ENCODE measurements at regions of chr3 and their contacts with region 1.

Region 1: GRCh38 chr3:95407709-95408463 is 1345.0 kb downstream of the NSUN3 start:
- DNase-seq: no peak
- H3K4me3 ChIP-seq: no peak overlapping the region
- H3K4me3 Mint-ChIP-seq: no peak overlapping the region
- H3K27ac Mint-ChIP-seq: no peak overlapping the region
- H3K4me1 ChIP-seq: peaks cover 28% of the 10 kb centered on the region
- H3K4me1 Mint-ChIP-seq: peaks cover 7% of the 10 kb centered on the region
- H3K27me3 ChIP-seq: no peaks in the 10 kb centered on the region
- H3K27me3 Mint-ChIP-seq: no peaks in the 10 kb centered on the region
- CTCF ChIP-seq: no peak

Region 2: DNA sequence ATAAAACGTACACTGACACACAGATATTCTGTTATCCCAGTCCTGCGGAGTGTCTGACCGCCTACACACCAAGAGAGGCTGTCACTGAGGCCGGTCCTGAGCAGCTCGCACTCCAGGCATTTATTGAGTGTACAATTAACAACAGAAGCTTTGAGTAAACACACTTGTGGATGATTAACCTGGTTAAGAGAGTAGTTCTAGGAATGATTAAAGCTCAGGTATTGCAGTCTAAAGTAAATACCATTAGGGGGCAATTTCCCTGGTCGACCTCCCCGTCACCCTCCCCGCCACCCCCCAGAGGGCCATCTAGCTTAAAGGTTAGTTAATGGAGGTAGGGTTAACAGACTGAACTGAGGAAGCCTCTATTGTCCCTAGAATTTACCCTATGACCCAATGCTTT is 66.6 kb before region 1 on chr3:
- CTCF ChIA-PET with region 1: no interaction called
- POLR2A ChIA-PET with region 1: no interaction called
- intact Hi-C with region 1: loop called (anchors 1 kb)
- DNase-seq: peak; percentile 57 to 85
- H3K4me3 ChIP-seq: no peak overlapping the region
- H3K4me3 Mint-ChIP-seq: peak overlapping the region; percentile 19
- H3K27ac Mint-ChIP-seq: no peak overlapping the region
- H3K4me1 ChIP-seq: peaks cover 43% of the 10 kb centered on the region
- H3K4me1 Mint-ChIP-seq: peaks cover 30% of the 10 kb centered on the region
- H3K27me3 ChIP-seq: no peaks in the 10 kb centered on the region
- H3K27me3 Mint-ChIP-seq: no peaks in the 10 kb centered on the region
- CTCF ChIP-seq: no peak

Measured in Caco-2 (cell line).